ENCODE measurements at regions of chr17 and their contacts with region 1.

Region 1: GRCh38 chr17:44199553-44200477 is at the start of gene ATXN7L3:
- DNase-seq: peak; percentile 99
- ATAC-seq: peak; percentile 77
- H3K4me3 ChIP-seq: peak within 1 kb of the TSS; percentile 89
- H3K27ac ChIP-seq: peak within 1 kb of the TSS; percentile 79
- H3K4me1 ChIP-seq: peaks cover 36% of the 10 kb centered on the region
- H3K27me3 ChIP-seq: no peaks in the 10 kb centered on the region
- CTCF ChIP-seq: no peak
- total RNA-seq, gene ATXN7L3: 73.9 and 78.3 TPM in 2 replicates

Region 2: GRCh38 chr17:44095642-44096496 is 103.9 kb before region 1 on chr17:
- CTCF ChIA-PET with region 1: no interaction called
- POLR2A ChIA-PET with region 1: no interaction called
- intact Hi-C with region 1: no loop called
- DNase-seq: peak; percentile 65
- ATAC-seq: peak; percentile 87
- H3K4me3 ChIP-seq: peak overlapping the region; percentile 17; the same call in 1 of the 2 replicates
- H3K27ac ChIP-seq: peak overlapping the region; percentile 57
- H3K4me1 ChIP-seq: peaks cover 14% of the 10 kb centered on the region
- H3K27me3 ChIP-seq: no peaks in the 10 kb centered on the region
- CTCF ChIP-seq: no peak

Region 3: DNA sequence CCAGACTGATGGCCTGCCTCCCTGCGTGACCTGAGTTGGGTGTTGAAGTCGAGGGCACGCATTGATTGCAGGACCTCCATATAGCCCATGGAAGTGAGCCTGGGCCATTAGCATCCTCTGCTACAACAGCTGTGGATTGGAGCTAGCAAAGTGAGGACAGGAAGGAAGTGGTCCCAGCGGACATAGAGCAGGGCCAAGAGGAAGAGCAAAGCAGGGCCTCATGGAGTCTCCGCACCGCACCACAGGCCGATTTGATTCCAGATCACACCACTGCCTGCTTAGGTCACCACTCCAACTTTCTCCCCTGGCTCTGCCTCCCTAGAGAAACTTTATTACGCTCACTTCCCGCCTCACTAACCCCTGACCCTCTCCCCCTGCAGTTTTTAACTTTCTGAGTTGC is 30.3 kb after region 1 on chr17:
- CTCF ChIA-PET with region 1: no interaction called
- POLR2A ChIA-PET with region 1: no interaction called
- intact Hi-C with region 1: no loop called
- DNase-seq: no peak
- ATAC-seq: no peak
- H3K4me3 ChIP-seq: no peak overlapping the region
- H3K27ac ChIP-seq: no peak overlapping the region
- H3K4me1 ChIP-seq: peaks cover 17% of the 10 kb centered on the region
- H3K27me3 ChIP-seq: no peaks in the 10 kb centered on the region
- CTCF ChIP-seq: no peak

Region 4: GRCh38 chr17:44247440-44247841 is 47.6 kb after region 1 on chr17:
- CTCF ChIA-PET with region 1: no interaction called
- POLR2A ChIA-PET with region 1: interaction called, 10 read pairs
- intact Hi-C with region 1: no loop called
- DNase-seq: no peak
- ATAC-seq: no peak
- H3K4me3 ChIP-seq: no peak overlapping the region
- H3K27ac ChIP-seq: no peak overlapping the region
- H3K4me1 ChIP-seq: no peaks in the 10 kb centered on the region
- H3K27me3 ChIP-seq: no peaks in the 10 kb centered on the region
- CTCF ChIP-seq: no peak

Region 5: GRCh38 chr17:44338702-44339101 is 138.9 kb after region 1 on chr17:
- CTCF ChIA-PET with region 1: no interaction called
- POLR2A ChIA-PET with region 1: no interaction called
- intact Hi-C with region 1: no loop called
- DNase-seq: peak; percentile 62
- ATAC-seq: peak; percentile 92
- H3K4me3 ChIP-seq: no peak overlapping the region
- H3K27ac ChIP-seq: no peak overlapping the region
- H3K4me1 ChIP-seq: peaks cover 7% of the 10 kb centered on the region
- H3K27me3 ChIP-seq: no peaks in the 10 kb centered on the region
- CTCF ChIP-seq: no peak